ENCODE measurements at regions of chr1 and their contacts with region 1.

Region 1: GRCh38 chr1:184354719-184355118 is 32.1 kb upstream of the C1orf21 start:
- DNase-seq: no peak
- ATAC-seq: no peak
- H3K4me3 ChIP-seq: no peak overlapping the region
- H3K27ac ChIP-seq: no peak overlapping the region
- H3K4me1 ChIP-seq: no peaks in the 10 kb centered on the region
- H3K27me3 ChIP-seq: no peaks in the 10 kb centered on the region
- CTCF ChIP-seq: no peak

Region 2: GRCh38 chr1:184379111-184379946 is 24.6 kb after region 1 on chr1:
- intact Hi-C with region 1: loop called in 1 of 10 experiments (anchors 1 kb)
- DNase-seq: no peak
- ATAC-seq: peak in 5 of 8 donors; percentile 60 to 67 (median 65)
- H3K4me3 ChIP-seq: no peak overlapping the region
- H3K27ac ChIP-seq: no peak overlapping the region
- H3K4me1 ChIP-seq: peaks cover 0 to 8% (median 0%) of the 10 kb centered on the region in 9 donors
- H3K27me3 ChIP-seq: no peaks in the 10 kb centered on the region
- CTCF ChIP-seq: peak in 7 of 9 donors; percentile 7 to 50 (median 42)